Adrenal gland (tissue), 19 donors: ENCODE measurements at regions of chr5 and their contacts with region 1.

Region 1: DNA sequence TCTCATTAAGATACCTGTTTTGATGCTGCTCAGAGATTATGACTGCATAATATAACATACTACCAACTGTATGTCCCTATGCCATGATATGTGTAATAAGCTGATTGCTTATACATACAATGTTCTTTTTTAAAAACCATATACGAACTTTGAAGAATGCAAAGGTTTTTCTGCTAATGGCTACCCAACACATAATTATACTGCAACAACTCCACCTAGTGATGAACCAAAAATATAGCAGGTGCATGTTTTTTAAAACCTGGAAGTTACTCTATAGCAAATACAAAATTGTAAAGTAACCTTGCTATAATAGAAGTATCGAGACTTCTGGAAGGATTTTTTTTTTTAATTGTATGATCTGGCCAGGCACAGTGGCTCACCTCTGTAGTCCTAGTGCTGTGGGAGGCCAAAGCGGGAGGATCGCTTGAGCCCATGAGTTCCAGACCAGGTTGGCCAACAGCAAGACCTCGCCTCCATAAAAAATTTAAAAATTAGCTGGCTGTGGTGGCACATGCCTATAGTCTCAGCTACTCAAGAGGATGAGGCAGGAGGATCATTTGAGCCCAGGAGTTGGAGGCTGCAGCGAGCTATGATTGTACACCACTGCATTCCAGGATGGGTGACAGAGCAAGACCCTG is 49.1 kb downstream of the HOMER1 start:
- DNase-seq: no peak
- H3K4me3 ChIP-seq: no peak overlapping the region
- H3K27ac ChIP-seq: no peak overlapping the region
- H3K4me1 ChIP-seq: no peaks in the 10 kb centered on the region
- H3K27me3 ChIP-seq: no peaks in the 10 kb centered on the region
- CTCF ChIP-seq: peak; percentile 40 to 72 (median 64)
- POLR2A ChIP-seq: no peak

Region 2: GRCh38 chr5:79133657-79134451 is 331.0 kb before region 1 on chr5:
- intact Hi-C with region 1: loop called (anchors 5 to 10 kb)
- DNase-seq: peak; percentile 49 to 86 (median 70)
- H3K4me3 ChIP-seq: peak overlapping the region in 1 of 4 donors; percentile 5
- H3K27ac ChIP-seq: peak overlapping the region in 2 of 5 donors; percentile 29 to 46
- H3K4me1 ChIP-seq: peaks cover 7 to 15% of the 10 kb centered on the region in 2 donors
- H3K27me3 ChIP-seq: no peaks in the 10 kb centered on the region
- CTCF ChIP-seq: peak; percentile 54 to 74 (median 65)
- POLR2A ChIP-seq: no peak

Region 3: GRCh38 chr5:79552984-79553383 is 88.2 kb after region 1 on chr5:
- intact Hi-C with region 1: no loop called
- DNase-seq: no peak
- H3K4me3 ChIP-seq: no peak overlapping the region
- H3K27ac ChIP-seq: no peak overlapping the region
- H3K4me1 ChIP-seq: no peaks in the 10 kb centered on the region
- H3K27me3 ChIP-seq: no peaks in the 10 kb centered on the region
- CTCF ChIP-seq: no peak
- POLR2A ChIP-seq: no peak

Region 4: DNA sequence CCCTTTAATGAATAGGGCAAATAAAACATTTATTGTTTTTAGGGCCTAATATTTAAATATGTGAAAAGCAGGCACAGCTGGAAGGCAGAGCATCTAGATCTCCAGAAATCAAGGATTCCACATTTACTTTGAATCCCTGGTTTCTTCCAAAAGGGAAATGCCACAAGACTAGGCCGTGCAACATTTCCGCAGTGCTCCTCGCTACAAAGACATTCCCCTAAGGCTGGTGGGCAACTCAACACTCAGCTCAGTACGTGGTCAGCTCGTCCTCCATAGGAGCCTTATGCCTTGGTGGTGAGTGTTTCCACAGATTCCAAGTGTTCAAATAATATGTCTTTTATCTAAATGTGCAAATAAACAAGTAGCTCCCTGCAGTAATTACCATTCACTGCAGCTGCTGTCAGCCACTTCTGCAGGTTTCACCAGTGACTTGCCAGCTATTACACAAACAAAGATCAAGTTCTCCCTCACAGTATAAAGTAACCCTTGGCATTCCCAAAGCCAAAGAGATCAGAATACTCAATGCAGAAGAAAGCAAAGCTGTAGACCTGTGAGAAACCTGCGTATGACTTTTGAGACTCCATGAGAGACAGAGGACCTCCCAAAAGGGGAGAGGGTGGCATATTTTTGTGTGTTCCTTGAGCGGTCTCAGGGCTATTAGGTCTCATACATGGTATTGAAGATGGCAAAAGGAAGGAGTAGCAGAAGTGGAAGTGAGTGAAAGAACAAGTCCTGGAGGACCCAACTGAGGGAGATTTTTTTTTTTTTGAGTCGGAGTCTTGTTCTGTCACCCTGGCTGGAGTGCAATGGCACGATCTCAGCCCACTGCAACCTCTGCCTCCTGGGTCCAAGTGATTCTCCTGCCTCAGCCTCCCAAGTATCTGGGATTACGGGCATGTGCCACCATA is 109.4 kb after region 1 on chr5:
- intact Hi-C with region 1: no loop called
- DNase-seq: no peak
- H3K4me3 ChIP-seq: no peak overlapping the region
- H3K27ac ChIP-seq: no peak overlapping the region
- H3K4me1 ChIP-seq: no peaks in the 10 kb centered on the region
- H3K27me3 ChIP-seq: no peaks in the 10 kb centered on the region
- CTCF ChIP-seq: no peak
- POLR2A ChIP-seq: no peak